WTC11 (cell line): ENCODE measurements at regions of chr1 and their contacts with region 1.

Region 1: GRCh38 chr1:160987359-160988062 is 32.9 kb upstream of the ITLN2 start:
- DNase-seq: no peak
- ATAC-seq: peak; percentile 62
- H3K4me3 Mint-ChIP-seq: peak overlapping the region; percentile 36
- H3K27ac Mint-ChIP-seq: peak overlapping the region; percentile 84
- H3K4me1 Mint-ChIP-seq: peaks cover 64% of the 10 kb centered on the region
- H3K27me3 Mint-ChIP-seq: no peaks in the 10 kb centered on the region
- CTCF ChIP-seq: no peak

Region 2: GRCh38 chr1:160971618-160972056 is 15.9 kb before region 1 on chr1:
- CTCF ChIA-PET with region 1: interaction called, 13 read pairs
- POLR2A ChIA-PET with region 1: interaction called, 3 read pairs
- DNase-seq: peak; percentile 35
- ATAC-seq: peak; percentile 95
- H3K4me3 Mint-ChIP-seq: no peak overlapping the region
- H3K27ac Mint-ChIP-seq: peak overlapping the region; percentile 79
- H3K4me1 Mint-ChIP-seq: peaks cover 33% of the 10 kb centered on the region
- H3K27me3 Mint-ChIP-seq: no peaks in the 10 kb centered on the region
- CTCF ChIP-seq: no peak

Region 3: DNA sequence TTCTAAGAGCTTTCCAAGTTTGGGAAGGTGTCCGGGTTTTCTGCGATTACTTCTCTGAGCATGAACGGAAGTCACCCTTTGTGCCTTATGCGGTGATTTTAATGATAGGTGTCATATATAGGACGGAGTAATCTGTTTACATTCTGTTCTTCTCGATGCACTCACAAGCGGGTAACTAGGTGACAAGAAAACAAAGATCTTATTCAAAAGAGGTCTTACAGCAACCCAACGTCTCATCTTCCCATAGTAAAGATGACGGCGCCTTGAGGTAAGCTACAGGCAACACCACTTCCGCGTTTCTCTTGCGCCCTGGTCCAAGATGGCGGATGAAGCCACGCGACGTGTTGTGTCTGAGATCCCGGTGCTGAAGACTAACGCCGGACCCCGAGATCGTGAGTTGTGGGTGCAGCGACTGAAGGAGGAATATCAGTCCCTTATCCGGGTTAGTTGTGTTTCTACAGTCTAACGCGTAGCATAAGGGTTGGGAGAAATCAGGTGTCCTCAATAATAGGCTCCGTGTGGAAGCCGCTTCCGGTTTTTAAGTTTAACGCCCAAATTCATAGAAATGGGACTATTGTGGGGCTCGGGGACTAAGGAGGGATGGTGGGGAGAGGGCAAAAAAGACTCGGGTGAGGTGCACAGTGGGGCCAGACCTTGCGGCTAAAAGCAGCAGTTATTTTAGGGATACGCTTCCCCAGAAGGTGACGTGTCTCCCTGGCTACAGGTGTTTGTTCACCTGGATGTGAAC is 166.3 kb after region 1 on chr1 and contains the start of gene UFC1:
- CTCF ChIA-PET with region 1: no interaction called
- POLR2A ChIA-PET with region 1: no interaction called
- DNase-seq: peak; percentile 71
- ATAC-seq: peak; percentile 92
- H3K4me3 Mint-ChIP-seq: peak within 1 kb of the TSS; percentile 99
- H3K27ac Mint-ChIP-seq: peak within 1 kb of the TSS; percentile 100
- H3K4me1 Mint-ChIP-seq: peaks cover 17% of the 10 kb centered on the region
- H3K27me3 Mint-ChIP-seq: no peaks in the 10 kb centered on the region
- CTCF ChIP-seq: no peak
- total RNA-seq, gene UFC1: 56.2 to 61.2 TPM (median 60.7 TPM) in 3 replicates